ENCODE measurements at regions of chr3 and their contacts with region 1.

Region 1: DNA sequence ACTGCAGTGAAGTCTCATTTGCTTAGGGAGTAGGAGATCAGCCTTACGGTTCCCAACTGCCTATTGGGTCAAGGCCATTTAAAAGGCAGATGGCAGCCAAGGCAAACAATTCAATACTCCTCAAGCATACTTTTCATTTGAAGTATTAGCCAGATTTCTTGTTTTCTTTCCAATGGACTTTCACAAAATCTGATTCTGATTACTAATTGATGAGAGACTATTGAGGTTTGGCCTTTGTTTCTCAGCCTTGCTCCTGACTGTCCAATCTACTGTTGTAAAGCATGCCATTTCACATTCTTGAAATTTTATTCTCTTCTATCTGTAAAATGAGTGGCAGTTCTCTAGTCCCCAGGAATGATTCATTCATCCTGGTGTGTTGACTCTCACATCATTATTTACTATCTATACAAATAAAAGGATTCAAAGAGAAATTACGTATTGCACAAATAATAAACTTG is 166.2 kb upstream of the TGFBR2 start:
- DNase-seq: peak; percentile 42
- H3K4me3 ChIP-seq: no peak overlapping the region
- CTCF ChIP-seq: no peak

Region 2: DNA sequence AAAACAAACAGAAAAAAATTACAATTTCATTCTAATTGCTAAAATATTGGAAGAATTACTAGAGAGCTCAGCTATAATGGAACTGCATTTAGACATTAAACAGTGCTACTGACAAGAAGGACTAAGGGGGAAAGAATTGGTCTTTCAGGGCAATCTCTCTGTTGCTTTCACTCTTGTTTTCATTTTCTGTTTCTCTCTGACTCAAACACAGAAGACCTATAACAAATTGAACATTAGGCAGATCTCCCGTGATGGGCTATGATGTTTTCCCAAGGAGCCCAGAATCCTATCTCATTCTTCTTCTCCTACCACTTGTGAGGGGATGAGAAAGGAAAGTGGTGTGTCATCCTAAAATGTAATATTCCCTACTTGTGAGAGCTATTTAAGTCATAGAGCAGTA is 191.8 kb before region 1 on chr3:
- in situ Hi-C with region 1: no loop called
- DNase-seq: no peak
- H3K4me3 ChIP-seq: no peak overlapping the region
- CTCF ChIP-seq: no peak

Region 3: DNA sequence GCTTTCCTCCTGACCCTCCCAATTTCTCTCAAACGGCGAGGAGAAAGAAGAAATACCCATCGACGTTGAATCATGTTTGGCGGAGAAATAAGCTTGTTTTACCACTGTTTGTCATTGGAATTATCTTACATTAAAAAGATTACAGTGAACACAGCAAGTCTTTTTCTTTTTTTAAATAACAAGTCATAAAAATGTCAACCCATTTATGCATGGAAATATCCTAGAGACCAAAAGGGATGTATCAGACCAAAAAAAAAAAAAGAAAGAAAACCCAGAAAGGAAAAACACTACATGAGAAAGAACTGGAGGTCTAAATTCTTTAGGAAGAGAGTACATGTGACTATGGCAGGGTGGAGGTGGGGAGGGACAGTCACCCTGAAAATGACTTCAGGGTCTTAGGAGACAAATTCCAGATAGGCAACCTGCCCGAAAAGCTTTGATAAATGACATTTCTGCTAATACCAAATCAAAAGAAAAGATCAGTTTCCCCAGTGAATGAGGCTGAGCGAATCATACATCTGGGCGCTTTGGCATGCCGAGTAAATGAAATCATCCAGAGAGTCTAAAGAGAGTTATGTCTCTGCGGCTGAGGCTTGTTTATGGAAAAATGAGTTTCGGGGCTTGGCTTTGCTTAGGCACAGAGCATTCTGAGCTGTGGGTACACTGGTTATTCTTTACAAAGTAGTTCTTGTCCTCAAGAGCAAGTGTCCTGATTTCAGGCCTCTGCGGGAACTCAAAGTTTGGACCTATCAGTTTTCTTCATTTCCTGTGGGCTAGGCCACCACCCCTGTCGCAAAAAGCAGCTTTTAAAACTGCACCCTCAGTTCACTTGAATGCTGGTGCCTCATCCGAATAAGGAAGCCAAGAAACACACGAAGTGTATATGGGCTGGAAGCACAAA is 56.1 kb after region 1 on chr3:
- in situ Hi-C with region 1: loop called (anchors 5 kb)
- DNase-seq: peak; percentile 56
- H3K4me3 ChIP-seq: no peak overlapping the region
- CTCF ChIP-seq: no peak